Endothelial cell of umbilical vein (primary cell): ENCODE measurements at regions of chr6 and their contacts with region 1.

Region 1: GRCh38 chr6:29649701-29650673 is 6.9 kb upstream of the MOG start:
- DNase-seq: peak; percentile 96
- H3K4me3 ChIP-seq: peak overlapping the region; percentile 16 to 66 (median 54)
- H3K27ac ChIP-seq: peak overlapping the region; percentile 41
- H3K4me1 ChIP-seq: peaks cover 4% of the 10 kb centered on the region
- H3K27me3 ChIP-seq: peaks cover 4 to 8% of the 10 kb centered on the region in 2 experiments
- CTCF ChIP-seq: peak; percentile 84 to 98
- POLR2A ChIP-seq: no peak

Region 2: DNA sequence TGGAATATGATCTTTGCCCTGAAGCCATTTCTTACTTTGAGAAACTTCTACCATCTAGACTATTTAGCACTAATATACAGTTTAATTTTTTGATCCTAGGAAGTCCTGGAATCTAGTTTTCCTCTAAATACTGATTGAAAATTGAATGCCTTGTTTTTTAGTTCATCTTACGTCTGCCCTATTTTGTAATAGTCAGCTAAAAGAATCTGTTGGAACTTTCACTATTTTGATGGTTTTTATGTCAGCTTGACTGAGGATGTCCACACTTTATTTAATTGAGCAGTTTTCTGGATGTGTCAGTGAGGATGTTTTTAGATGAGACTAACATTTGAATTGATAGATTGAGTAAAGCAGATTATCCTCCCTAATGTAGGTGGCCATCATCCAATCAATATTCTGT is 246.2 kb before region 1 on chr6:
- CTCF ChIA-PET with region 1: no interaction called
- POLR2A ChIA-PET with region 1: no interaction called
- dilution Hi-C with region 1: no loop called
- intact Hi-C with region 1: no loop called
- DNase-seq: no peak
- H3K4me3 ChIP-seq: no peak overlapping the region
- H3K27ac ChIP-seq: no peak overlapping the region
- H3K4me1 ChIP-seq: no peaks in the 10 kb centered on the region
- H3K27me3 ChIP-seq: no peaks in the 10 kb centered on the region
- CTCF ChIP-seq: no peak
- POLR2A ChIP-seq: no peak

Region 3: DNA sequence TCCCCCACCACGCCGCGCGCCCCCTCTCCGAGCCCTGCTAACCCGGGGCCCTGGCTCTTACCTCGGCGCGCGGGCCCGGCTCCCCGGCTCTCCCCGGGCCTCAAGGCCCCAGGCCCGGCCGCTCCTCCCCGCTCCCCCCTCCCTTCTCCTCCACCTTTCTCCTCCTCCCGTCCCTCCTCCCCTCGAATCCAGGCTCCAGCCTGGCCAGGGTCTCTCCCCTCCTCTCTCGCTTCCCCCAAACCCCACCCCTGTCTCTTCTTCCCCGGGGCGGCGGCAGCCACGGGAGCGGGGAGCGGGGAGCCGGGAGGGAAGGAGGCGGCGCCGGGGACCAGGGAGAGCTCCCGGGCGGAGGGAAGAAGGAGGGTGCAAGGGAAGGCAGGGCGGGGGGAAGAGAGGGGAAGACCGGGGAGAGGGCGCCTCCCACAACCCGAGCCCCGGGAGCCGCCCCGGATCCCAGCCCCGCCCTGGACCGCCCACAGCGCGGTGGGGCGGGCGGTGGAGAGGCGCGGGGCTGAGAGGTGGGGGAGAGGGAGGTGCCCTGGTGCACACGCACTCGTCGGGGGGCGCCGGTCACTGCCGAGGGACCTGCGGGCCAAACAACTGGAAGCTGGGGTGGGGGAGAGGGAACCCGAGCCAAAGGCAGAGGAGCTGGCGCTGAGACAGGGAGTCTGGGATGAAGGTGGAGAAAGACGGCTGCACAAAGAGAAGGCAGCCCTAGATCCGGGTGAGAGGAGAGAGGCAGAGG is 17.0 kb before region 1 on chr6 and contains the start of gene GABBR1:
- CTCF ChIA-PET with region 1: interaction called, 34 read pairs
- POLR2A ChIA-PET with region 1: interaction called, 8 read pairs
- dilution Hi-C with region 1: no loop called
- intact Hi-C with region 1: loop called (anchors 1 kb)
- DNase-seq: peak; percentile 59
- H3K4me3 ChIP-seq: peak within 1 kb of the TSS; percentile 57 to 73 (median 62)
- H3K27ac ChIP-seq: no peak within 1 kb of the TSS
- H3K4me1 ChIP-seq: peaks cover 28% of the 10 kb centered on the region
- H3K27me3 ChIP-seq: no peaks in the 10 kb centered on the region
- CTCF ChIP-seq: no peak
- POLR2A ChIP-seq: no peak
- total RNA-seq, gene GABBR1: 50.8 and 52.1 TPM in 2 replicates

Region 4: GRCh38 chr6:29676981-29677601 is 27.1 kb after region 1 on chr6:
- CTCF ChIA-PET with region 1: interaction called, 33 read pairs
- POLR2A ChIA-PET with region 1: no interaction called
- dilution Hi-C with region 1: no loop called
- intact Hi-C with region 1: no loop called
- DNase-seq: no peak
- H3K4me3 ChIP-seq: no peak overlapping the region
- H3K27ac ChIP-seq: no peak overlapping the region
- H3K4me1 ChIP-seq: no peaks in the 10 kb centered on the region
- H3K27me3 ChIP-seq: peaks cover 0 to 2% of the 10 kb centered on the region in 2 experiments
- CTCF ChIP-seq: no peak
- POLR2A ChIP-seq: no peak

Region 5: DNA sequence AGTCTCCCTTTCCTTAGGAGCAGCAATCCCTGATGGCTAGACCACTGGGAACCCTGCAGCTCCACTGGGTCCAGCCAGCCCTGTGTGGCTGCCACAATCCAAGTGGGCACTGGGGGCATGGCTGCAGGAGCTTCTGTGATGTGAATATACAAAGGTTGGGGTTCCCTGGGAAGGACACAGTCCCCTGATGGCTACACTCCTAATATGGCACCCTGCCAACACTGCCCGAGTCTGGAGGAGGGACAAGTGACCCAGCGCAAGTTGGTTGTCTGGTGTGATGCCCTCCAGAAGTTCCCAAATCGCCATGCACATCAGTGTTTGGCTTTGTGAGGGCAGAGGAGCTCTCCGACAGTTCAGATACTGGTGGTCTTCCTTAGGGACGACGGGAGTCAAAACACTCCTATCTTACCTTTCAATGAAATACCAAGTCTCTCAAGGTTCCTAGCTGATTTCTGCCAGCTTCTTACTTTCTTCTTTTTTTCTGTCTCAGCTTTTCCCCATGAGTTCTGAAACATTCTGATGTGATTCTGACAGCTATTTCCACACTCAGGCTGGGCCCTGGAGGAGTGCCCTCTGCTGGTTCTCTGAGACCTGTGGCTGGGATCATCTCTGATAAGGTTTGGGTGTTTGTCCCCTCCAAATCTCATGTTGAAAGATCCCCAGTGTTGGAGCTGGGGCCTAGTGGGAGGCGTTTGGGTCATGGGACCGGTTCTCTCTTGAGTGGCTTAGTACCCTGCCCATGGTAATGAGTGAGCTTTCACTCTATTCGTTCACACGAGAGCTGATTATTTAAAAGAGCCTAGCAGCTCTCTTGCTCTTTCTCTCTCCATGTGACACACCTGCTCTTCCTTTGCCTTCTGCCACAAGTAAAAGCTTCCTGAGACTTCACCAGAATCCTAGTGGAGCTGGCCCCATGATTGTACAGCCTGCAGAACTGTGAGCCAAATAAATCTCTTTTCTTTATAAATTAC is 46.5 kb after region 1 on chr6:
- CTCF ChIA-PET with region 1: interaction called, 97 read pairs
- POLR2A ChIA-PET with region 1: no interaction called
- dilution Hi-C with region 1: no loop called
- intact Hi-C with region 1: loop called (anchors 2 kb)
- DNase-seq: no peak
- H3K4me3 ChIP-seq: no peak overlapping the region
- H3K27ac ChIP-seq: no peak overlapping the region
- H3K4me1 ChIP-seq: no peaks in the 10 kb centered on the region
- H3K27me3 ChIP-seq: peaks cover 0 to 2% of the 10 kb centered on the region in 2 experiments
- CTCF ChIP-seq: peak; percentile 40 to 55
- POLR2A ChIP-seq: no peak

Region 6: GRCh38 chr6:29752451-29753308 is 102.7 kb after region 1 on chr6:
- CTCF ChIA-PET with region 1: interaction called, 8 read pairs
- POLR2A ChIA-PET with region 1: no interaction called
- dilution Hi-C with region 1: no loop called
- intact Hi-C with region 1: loop called (anchors 2 kb)
- DNase-seq: peak; percentile 92
- H3K4me3 ChIP-seq: peak overlapping the region; percentile 48 to 96 (median 82)
- H3K27ac ChIP-seq: peak overlapping the region; percentile 76
- H3K4me1 ChIP-seq: peaks cover 21% of the 10 kb centered on the region
- H3K27me3 ChIP-seq: peaks cover 8 to 26% of the 10 kb centered on the region in 2 experiments
- CTCF ChIP-seq: peak; percentile 99 to 100
- POLR2A ChIP-seq: peak; percentile 47

Region 7: GRCh38 chr6:29925727-29926412 is 275.9 kb after region 1 on chr6:
- CTCF ChIA-PET with region 1: no interaction called
- POLR2A ChIA-PET with region 1: no interaction called
- dilution Hi-C with region 1: no loop called
- intact Hi-C with region 1: no loop called
- DNase-seq: no peak
- H3K4me3 ChIP-seq: peak overlapping the region in 2 of 3 experiments; percentile 67 to 74
- H3K27ac ChIP-seq: peak overlapping the region; percentile 63
- H3K4me1 ChIP-seq: peaks cover 9% of the 10 kb centered on the region
- H3K27me3 ChIP-seq: peaks cover 0 to 2% of the 10 kb centered on the region in 2 experiments
- CTCF ChIP-seq: no peak
- POLR2A ChIP-seq: no peak